Right lobe of liver (tissue), 6 donors: ENCODE measurements at regions of chr1 and their contacts with region 1.

Region 1: GRCh38 chr1:153796791-153797659 is 21.8 kb downstream of the SLC27A3 start:
- DNase-seq: peak in 2 of 3 donors; percentile 73 to 85
- ATAC-seq: peak; percentile 63 to 75 (median 70)
- H3K4me3 ChIP-seq: no peak overlapping the region
- H3K27ac ChIP-seq: no peak overlapping the region
- H3K4me1 ChIP-seq: peaks cover 0 to 10% (median 6%) of the 10 kb centered on the region in 4 donors
- H3K27me3 ChIP-seq: no peaks in the 10 kb centered on the region
- CTCF ChIP-seq: peak; percentile 88 to 91 (median 90)
- POLR2A ChIP-seq: no peak

Region 2: GRCh38 chr1:153922972-153923925 is 126.2 kb after region 1 on chr1 and contains the start of gene GATAD2B:
- intact Hi-C with region 1: loop called in 1 of 2 experiments (anchors 10 kb)
- DNase-seq: peak; percentile 100
- ATAC-seq: peak; percentile 94 to 98 (median 96)
- H3K4me3 ChIP-seq: peak within 1 kb of the TSS; percentile 66 to 84 (median 72)
- H3K27ac ChIP-seq: peak within 1 kb of the TSS; percentile 73 to 80 (median 76)
- H3K4me1 ChIP-seq: peaks cover 0 to 24% (median 5%) of the 10 kb centered on the region in 4 donors
- H3K27me3 ChIP-seq: no peaks in the 10 kb centered on the region
- CTCF ChIP-seq: no peak
- POLR2A ChIP-seq: no peak
- total RNA-seq, gene GATAD2B: 9.8 to 20.3 (median 16.8) TPM

Region 3: DNA sequence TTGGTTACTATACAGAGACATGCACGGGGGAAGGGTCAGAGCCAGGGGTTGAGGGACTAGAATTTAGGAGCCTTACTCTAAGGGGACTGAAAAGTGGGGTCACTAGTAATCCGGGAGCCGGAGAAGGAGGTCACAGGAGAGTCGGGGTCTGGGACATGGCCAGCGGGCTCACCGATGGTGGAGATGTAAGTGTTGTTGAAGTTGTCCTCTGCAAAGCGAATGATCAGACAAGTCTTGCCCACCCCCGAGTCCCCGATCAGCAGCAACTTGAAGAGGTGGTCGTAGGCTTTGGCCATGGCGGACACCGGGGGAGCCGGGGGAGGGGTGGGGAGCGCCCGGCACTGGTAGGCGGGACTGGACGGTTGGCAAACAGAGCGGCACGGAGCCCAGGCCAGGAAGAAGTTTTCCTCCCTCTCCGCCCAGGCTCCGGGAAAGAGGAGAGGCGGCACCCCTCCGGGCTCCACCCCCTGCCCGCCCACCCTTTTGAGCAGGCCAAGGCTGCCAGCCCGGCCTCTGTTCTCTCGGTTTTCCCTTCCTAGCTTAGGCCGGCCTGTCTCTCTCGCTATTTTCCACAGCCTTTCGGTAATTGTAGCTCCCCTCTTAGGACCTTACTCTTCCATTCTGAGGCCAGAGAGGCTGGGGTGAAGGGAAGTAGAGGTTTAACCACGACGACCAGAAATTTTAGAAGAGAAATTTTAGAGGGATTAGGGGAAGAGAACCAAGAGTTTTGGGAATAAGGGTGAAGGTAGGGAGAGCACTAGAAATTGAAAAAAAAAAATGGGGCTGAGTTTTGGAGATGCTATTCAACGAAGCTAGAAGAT is 189.1 kb after region 1 on chr1 and contains the start of gene RAB13:
- intact Hi-C with region 1: loop called in 1 of 2 experiments (anchors 5 kb)
- DNase-seq: peak; percentile 91 to 93 (median 92)
- ATAC-seq: peak; percentile 83 to 94 (median 86)
- H3K4me3 ChIP-seq: peak within 1 kb of the TSS; percentile 52 to 76 (median 70)
- H3K27ac ChIP-seq: peak within 1 kb of the TSS; percentile 58 to 83 (median 75)
- H3K4me1 ChIP-seq: peaks cover 0 to 16% (median 5%) of the 10 kb centered on the region in 4 donors
- H3K27me3 ChIP-seq: no peaks in the 10 kb centered on the region
- CTCF ChIP-seq: no peak
- POLR2A ChIP-seq: peak; percentile 30
- total RNA-seq, gene RAB13: 11.9 to 52.2 (median 47.9) TPM